Psoas muscle (tissue), 8 donors: ENCODE measurements at regions of chr1 and their contacts with region 1.

Region 1: DNA sequence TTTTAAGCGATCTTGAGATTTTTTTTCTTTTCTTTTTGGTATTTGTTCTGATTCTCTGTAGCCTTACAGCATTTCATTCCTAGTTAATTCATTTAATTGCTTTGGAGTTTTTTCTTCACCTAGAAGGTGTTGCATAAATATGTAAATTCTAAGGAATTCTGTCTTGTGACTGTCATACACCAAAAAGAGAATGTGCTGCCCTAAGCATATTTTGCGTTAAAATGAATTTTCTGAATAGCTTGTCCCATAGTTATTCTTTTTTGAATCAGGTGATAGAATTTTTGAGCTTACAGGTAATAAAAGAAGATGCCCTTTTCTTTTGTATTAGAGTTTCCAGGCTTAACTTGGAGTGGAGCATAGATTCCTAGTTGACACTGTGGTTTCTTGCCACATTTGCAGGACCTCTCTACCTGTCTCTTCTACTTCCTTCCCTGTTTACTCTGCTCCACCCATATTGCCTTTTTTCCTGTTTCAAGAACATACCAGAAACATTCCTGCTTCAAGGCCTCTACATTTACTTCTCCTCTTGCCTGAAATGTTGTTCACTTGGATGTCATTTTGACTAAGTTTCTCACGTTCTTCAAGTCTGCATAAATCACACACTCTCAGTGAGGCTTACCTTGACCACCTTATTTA is 53.2 kb downstream of the KIF1B start:
- DNase-seq: no peak
- ATAC-seq: no peak
- H3K4me3 ChIP-seq: no peak overlapping the region
- H3K27ac ChIP-seq: no peak overlapping the region
- H3K4me1 ChIP-seq: peaks cover 15% of the 10 kb centered on the region
- H3K27me3 ChIP-seq: no peaks in the 10 kb centered on the region
- CTCF ChIP-seq: no peak

Region 2: GRCh38 chr1:10278880-10279279 is 15.3 kb after region 1 on chr1:
- intact Hi-C with region 1: loop called in 1 of 2 experiments (anchors 2 kb)
- DNase-seq: no peak
- ATAC-seq: no peak
- H3K4me3 ChIP-seq: no peak overlapping the region
- H3K27ac ChIP-seq: peak overlapping the region; percentile 87
- H3K4me1 ChIP-seq: peaks cover 41% of the 10 kb centered on the region
- H3K27me3 ChIP-seq: no peaks in the 10 kb centered on the region
- CTCF ChIP-seq: no peak